Endothelial cell of umbilical vein (primary cell): ENCODE measurements at regions of chr9 and their contacts with region 1.

Region 1: DNA sequence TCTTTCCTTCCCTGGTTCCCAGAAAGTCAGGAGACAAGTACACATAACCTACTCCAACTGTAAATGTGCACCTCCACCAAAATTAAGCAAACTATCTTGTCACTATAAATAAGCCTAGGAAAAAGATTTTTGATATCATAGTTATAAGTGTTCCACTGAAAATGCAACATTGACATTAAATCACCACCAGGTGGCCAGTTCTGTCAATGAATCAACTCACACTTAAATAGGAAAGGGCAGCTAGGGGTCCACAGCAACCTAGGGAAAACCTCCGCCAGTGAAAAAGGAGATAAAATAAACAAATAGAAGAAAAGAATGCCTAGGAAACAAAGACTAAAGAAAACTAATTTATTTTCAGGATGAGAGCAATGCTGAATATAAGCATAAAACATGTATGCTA is 243.1 kb upstream of the PTPRD start:
- DNase-seq: peak; percentile 51
- H3K4me3 ChIP-seq: no peak overlapping the region
- H3K27ac ChIP-seq: no peak overlapping the region
- H3K4me1 ChIP-seq: peaks cover 3% of the 10 kb centered on the region
- H3K27me3 ChIP-seq: no peaks in the 10 kb centered on the region
- CTCF ChIP-seq: peak; percentile 31 to 51
- POLR2A ChIP-seq: no peak

Region 2: DNA sequence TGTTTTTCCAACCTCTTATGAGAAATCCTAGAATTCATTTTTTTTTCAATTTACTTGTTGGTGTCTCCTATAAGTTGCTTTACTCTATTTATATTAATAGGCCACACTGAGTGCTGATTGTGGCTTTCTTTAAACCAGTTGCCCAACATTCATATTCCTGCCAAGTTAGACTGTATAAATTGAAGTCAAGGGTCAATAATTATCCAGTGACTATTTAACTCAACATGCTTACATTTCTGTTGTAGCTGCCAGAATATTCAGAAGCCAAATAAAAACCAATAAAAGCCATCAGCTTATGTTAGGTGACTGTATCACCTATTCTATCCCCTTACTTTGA is 412.0 kb before region 1 on chr9:
- CTCF ChIA-PET with region 1: no interaction called
- POLR2A ChIA-PET with region 1: no interaction called
- dilution Hi-C with region 1: no loop called
- intact Hi-C with region 1: no loop called
- DNase-seq: no peak
- H3K4me3 ChIP-seq: no peak overlapping the region
- H3K27ac ChIP-seq: no peak overlapping the region
- H3K4me1 ChIP-seq: no peaks in the 10 kb centered on the region
- H3K27me3 ChIP-seq: no peaks in the 10 kb centered on the region
- CTCF ChIP-seq: no peak
- POLR2A ChIP-seq: no peak

Region 3: GRCh38 chr9:10875752-10876151 is 19.9 kb after region 1 on chr9:
- CTCF ChIA-PET with region 1: interaction called, 15 read pairs
- POLR2A ChIA-PET with region 1: no interaction called
- dilution Hi-C with region 1: no loop called
- intact Hi-C with region 1: no loop called
- DNase-seq: peak; percentile 84
- H3K4me3 ChIP-seq: no peak overlapping the region
- H3K27ac ChIP-seq: peak overlapping the region; percentile 77
- H3K4me1 ChIP-seq: peaks cover 16% of the 10 kb centered on the region
- H3K27me3 ChIP-seq: no peaks in the 10 kb centered on the region
- CTCF ChIP-seq: no peak
- POLR2A ChIP-seq: no peak

Region 4: DNA sequence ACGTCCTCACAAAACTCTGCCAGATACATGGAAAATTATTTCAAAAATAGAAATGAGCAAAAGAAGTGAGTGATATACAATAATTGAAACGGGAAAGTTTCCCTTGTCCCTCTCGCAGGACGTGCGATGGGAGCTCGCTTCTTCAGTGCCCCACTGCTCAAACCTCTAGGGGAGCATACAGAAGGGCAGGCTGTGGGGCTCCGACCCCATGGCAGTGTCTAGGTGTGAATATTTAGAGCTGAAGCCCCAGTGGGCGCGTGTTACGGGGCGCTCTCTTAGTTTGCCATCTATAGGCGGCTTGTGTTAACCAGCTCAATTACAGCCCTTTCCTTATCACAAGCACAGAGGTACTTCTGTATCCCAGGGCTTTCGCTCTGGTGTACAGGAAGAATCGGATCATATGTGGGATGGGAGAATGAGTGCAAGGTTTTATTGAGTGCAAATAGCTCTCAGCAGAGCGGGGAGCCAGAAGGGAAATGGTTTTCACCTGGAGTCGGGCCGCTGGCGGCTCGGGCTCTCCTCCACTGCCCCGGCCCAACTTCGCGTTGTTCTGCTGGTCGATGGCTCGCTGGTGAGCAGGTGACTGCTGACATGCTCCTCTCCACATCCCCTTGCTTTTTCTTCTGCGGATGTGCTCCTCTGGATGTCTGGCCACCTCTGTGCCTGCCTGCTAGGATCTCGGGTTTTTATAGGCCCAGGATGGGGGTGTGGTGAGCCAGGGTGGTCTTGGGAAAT is 91.0 kb after region 1 on chr9:
- CTCF ChIA-PET with region 1: no interaction called
- POLR2A ChIA-PET with region 1: no interaction called
- dilution Hi-C with region 1: no loop called
- intact Hi-C with region 1: no loop called
- DNase-seq: no peak
- H3K4me3 ChIP-seq: no peak overlapping the region
- H3K27ac ChIP-seq: no peak overlapping the region
- H3K4me1 ChIP-seq: no peaks in the 10 kb centered on the region
- H3K27me3 ChIP-seq: no peaks in the 10 kb centered on the region
- CTCF ChIP-seq: no peak
- POLR2A ChIP-seq: no peak

Region 5: DNA sequence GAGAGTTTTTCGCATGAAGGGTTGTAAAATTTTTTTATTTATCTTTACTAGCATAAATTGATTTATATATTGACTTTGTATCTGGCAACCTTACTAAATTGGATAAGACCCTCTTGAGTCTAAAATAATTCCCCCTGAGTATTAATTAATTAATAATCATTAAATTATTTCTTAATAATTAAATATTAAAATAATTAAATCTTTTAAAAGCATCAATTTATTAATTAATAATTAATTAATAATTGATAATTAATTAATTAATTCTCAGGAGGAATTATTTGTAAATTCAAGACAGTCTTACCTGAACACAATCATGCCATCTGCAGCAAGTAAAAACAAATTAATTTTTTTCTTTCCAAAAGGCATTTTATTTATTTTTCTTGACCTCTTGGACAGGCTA is 127.4 kb after region 1 on chr9:
- CTCF ChIA-PET with region 1: no interaction called
- POLR2A ChIA-PET with region 1: no interaction called
- dilution Hi-C with region 1: no loop called
- intact Hi-C with region 1: no loop called
- DNase-seq: no peak
- H3K4me3 ChIP-seq: no peak overlapping the region
- H3K27ac ChIP-seq: no peak overlapping the region
- H3K4me1 ChIP-seq: no peaks in the 10 kb centered on the region
- H3K27me3 ChIP-seq: no peaks in the 10 kb centered on the region
- CTCF ChIP-seq: no peak
- POLR2A ChIP-seq: no peak

Region 6: DNA sequence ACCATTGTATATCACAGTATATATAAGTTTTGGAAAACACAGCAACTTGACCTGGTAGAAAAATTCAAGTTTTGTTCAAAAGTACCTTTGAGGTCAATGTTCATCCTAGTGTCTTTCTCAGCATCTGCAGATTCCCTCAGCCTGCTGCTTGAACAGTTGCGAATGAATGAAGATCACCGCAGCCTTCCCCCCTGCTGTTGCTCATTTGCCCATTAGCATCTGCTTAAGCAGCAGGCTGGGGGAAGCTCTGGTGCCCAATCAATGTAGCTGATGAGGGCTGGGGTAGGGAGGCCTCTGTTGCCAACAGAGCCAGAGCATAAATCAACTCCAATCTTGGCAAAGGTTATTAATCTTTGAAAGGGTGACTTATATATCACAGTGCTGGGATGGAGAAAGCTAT is 343.5 kb after region 1 on chr9:
- CTCF ChIA-PET with region 1: no interaction called
- POLR2A ChIA-PET with region 1: no interaction called
- dilution Hi-C with region 1: no loop called
- intact Hi-C with region 1: no loop called
- DNase-seq: no peak
- H3K4me3 ChIP-seq: no peak overlapping the region
- H3K27ac ChIP-seq: no peak overlapping the region
- H3K4me1 ChIP-seq: no peaks in the 10 kb centered on the region
- H3K27me3 ChIP-seq: no peaks in the 10 kb centered on the region
- CTCF ChIP-seq: no peak
- POLR2A ChIP-seq: no peak

Region 7: GRCh38 chr9:11319538-11319937 is 463.7 kb after region 1 on chr9:
- CTCF ChIA-PET with region 1: interaction called, 15 read pairs
- POLR2A ChIA-PET with region 1: no interaction called
- dilution Hi-C with region 1: no loop called
- intact Hi-C with region 1: loop called (anchors 2 kb)
- DNase-seq: peak; percentile 6
- H3K4me3 ChIP-seq: no peak overlapping the region
- H3K27ac ChIP-seq: no peak overlapping the region
- H3K4me1 ChIP-seq: no peaks in the 10 kb centered on the region
- H3K27me3 ChIP-seq: no peaks in the 10 kb centered on the region
- CTCF ChIP-seq: peak; percentile 21 to 25
- POLR2A ChIP-seq: no peak

Region 8: GRCh38 chr9:12425878-12426864 is 1570.3 kb after region 1 on chr9:
- CTCF ChIA-PET with region 1: interaction called, 46 read pairs
- POLR2A ChIA-PET with region 1: no interaction called
- dilution Hi-C with region 1: no loop called
- intact Hi-C with region 1: loop called (anchors 1 kb)
- DNase-seq: peak; percentile 64
- H3K4me3 ChIP-seq: no peak overlapping the region
- H3K27ac ChIP-seq: no peak overlapping the region
- H3K4me1 ChIP-seq: peaks cover 27% of the 10 kb centered on the region
- H3K27me3 ChIP-seq: no peaks in the 10 kb centered on the region
- CTCF ChIP-seq: peak; percentile 21 to 22
- POLR2A ChIP-seq: no peak

Region 9: GRCh38 chr9:12640016-12640587 is 1784.2 kb after region 1 on chr9:
- CTCF ChIA-PET with region 1: interaction called, 20 read pairs
- POLR2A ChIA-PET with region 1: no interaction called
- dilution Hi-C with region 1: no loop called
- intact Hi-C with region 1: loop called (anchors 2 kb)
- DNase-seq: peak; percentile 64
- H3K4me3 ChIP-seq: no peak overlapping the region
- H3K27ac ChIP-seq: no peak overlapping the region
- H3K4me1 ChIP-seq: no peaks in the 10 kb centered on the region
- H3K27me3 ChIP-seq: peaks cover 3 to 5% of the 10 kb centered on the region in 2 experiments
- CTCF ChIP-seq: peak in 1 of 2 donors; percentile 31
- POLR2A ChIP-seq: no peak